Activated T-helper 1 cell treated with anti-CD3 and anti-CD28 coated beads, Interleukin-12 subunit alpha, Interleukin-12 subunit beta, Interleukin-2, Interleukin-4 antibody, amounts not matched to agents 30 ng/mL and 10 ng/mL and 1 ng/mL, durations not matched to agents 14 hours and 24 hours and 36 hours (primary cell): ENCODE measurements at regions of chr5 and their contacts with region 1.

Region 1: DNA sequence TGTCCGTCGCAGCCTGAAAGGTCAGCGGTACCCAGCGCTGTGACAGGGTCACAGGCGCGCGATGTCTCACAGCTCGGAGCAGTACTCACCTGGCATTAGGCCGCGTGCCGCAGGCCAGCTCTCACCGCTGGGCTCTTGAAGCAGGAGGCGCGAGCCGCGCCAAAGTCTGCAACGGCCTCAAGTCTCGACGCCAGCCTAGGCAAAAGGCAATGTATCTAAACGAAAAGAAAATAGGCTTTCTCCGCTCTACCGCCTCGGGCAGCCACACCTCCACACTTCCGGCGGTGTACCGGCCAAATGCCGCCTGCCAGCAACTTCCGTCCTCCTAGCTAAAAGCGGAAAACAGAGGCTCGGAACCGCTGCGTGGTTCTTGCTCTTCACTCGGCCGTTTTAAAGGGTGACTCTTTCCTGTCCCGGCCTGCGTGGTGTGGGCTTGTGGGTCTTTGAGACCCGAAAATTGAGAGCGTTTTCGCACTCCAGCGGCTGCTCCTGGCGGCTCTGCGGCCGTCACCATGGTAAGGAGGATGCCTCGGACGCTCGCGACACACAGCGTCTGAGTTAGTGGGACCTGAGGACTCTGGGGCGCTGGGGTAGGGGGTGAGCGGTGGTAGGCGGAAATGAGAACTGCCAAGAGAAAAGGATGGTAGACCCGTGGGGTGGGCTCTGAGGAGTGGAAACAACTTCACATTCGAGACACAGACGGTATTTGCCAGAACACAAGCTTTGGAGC is at the starts of genes GFM2 and NSA2:
- DNase-seq: peak; percentile 91
- H3K4me3 Mint-ChIP-seq: peak within 1 kb of the TSS; percentile 98
- H3K27ac Mint-ChIP-seq: peak within 1 kb of the TSS; percentile 98
- H3K4me1 Mint-ChIP-seq: peaks cover 17% of the 10 kb centered on the region
- H3K27me3 Mint-ChIP-seq: no peaks in the 10 kb centered on the region
- total RNA-seq, gene GFM2: 32.4 and 35.5 TPM in 2 replicates
- total RNA-seq, gene NSA2: 89.0 and 94.9 TPM in 2 replicates

Region 2: GRCh38 chr5:73565139-73565968 is 1201.7 kb before region 1 on chr5 and contains the starts of genes ANKRA2 and UTP15:
- intact Hi-C with region 1: loop called (anchors 1 kb)
- DNase-seq: peak; percentile 98
- H3K4me3 Mint-ChIP-seq: peak within 1 kb of the TSS; percentile 95
- H3K27ac Mint-ChIP-seq: peak within 1 kb of the TSS; percentile 99
- H3K4me1 Mint-ChIP-seq: peaks cover 32% of the 10 kb centered on the region
- H3K27me3 Mint-ChIP-seq: no peaks in the 10 kb centered on the region
- total RNA-seq, gene ANKRA2: 15.8 and 18.8 TPM in 2 replicates
- total RNA-seq, gene UTP15: 61.0 and 64.1 TPM in 2 replicates

Region 3: GRCh38 chr5:74684900-74685851 is 81.8 kb before region 1 on chr5 and contains the start of gene HEXB:
- intact Hi-C with region 1: loop called (anchors 1 kb)
- DNase-seq: peak; percentile 83
- H3K4me3 Mint-ChIP-seq: peak within 1 kb of the TSS; percentile 90
- H3K27ac Mint-ChIP-seq: peak within 1 kb of the TSS; percentile 71
- H3K4me1 Mint-ChIP-seq: peaks cover 23% of the 10 kb centered on the region
- H3K27me3 Mint-ChIP-seq: peaks cover 14% of the 10 kb centered on the region
- total RNA-seq, gene HEXB: 62.7 and 71.4 TPM in 2 replicates

Region 4: GRCh38 chr5:74919487-74919886 is 152.5 kb after region 1 on chr5:
- intact Hi-C with region 1: loop called (anchors 1 kb)
- DNase-seq: no peak
- H3K4me3 Mint-ChIP-seq: no peak overlapping the region
- H3K27ac Mint-ChIP-seq: no peak overlapping the region
- H3K4me1 Mint-ChIP-seq: no peaks in the 10 kb centered on the region
- H3K27me3 Mint-ChIP-seq: peaks cover 4% of the 10 kb centered on the region

Region 5: GRCh38 chr5:75336625-75337339 is 569.8 kb after region 1 on chr5 and contains the start of gene HMGCR:
- intact Hi-C with region 1: loop called (anchors 1 kb)
- DNase-seq: peak; percentile 96
- H3K4me3 Mint-ChIP-seq: no peak within 1 kb of the TSS
- H3K27ac Mint-ChIP-seq: no peak within 1 kb of the TSS
- H3K4me1 Mint-ChIP-seq: peaks cover 40% of the 10 kb centered on the region
- H3K27me3 Mint-ChIP-seq: no peaks in the 10 kb centered on the region
- total RNA-seq, gene HMGCR: 95.7 and 113 TPM in 2 replicates

Region 6: GRCh38 chr5:75717082-75717922 is 950.3 kb after region 1 on chr5 and contains the start of gene POC5:
- intact Hi-C with region 1: loop called (anchors 10 kb)
- DNase-seq: peak; percentile 98
- H3K4me3 Mint-ChIP-seq: peak within 1 kb of the TSS; percentile 98
- H3K27ac Mint-ChIP-seq: peak within 1 kb of the TSS; percentile 100
- H3K4me1 Mint-ChIP-seq: peaks cover 34% of the 10 kb centered on the region
- H3K27me3 Mint-ChIP-seq: peaks cover 3% of the 10 kb centered on the region
- total RNA-seq, gene POC5: 20.7 and 24.2 TPM in 2 replicates